Activated T-helper 1 cell treated with anti-CD3 and anti-CD28 coated beads, Interleukin-12 subunit alpha, Interleukin-12 subunit beta, Interleukin-2, Interleukin-4 antibody, amounts not matched to agents 30 ng/mL and 10 ng/mL and 1 ng/mL, durations not matched to agents 14 hours and 24 hours and 36 hours (primary cell): ENCODE measurements at regions of chr6 and their contacts with region 1.

Region 1: GRCh38 chr6:90393232-90393884 is 96.7 kb upstream of the BACH2 start:
- DNase-seq: peak; percentile 65
- H3K4me3 Mint-ChIP-seq: no peak overlapping the region
- H3K27ac Mint-ChIP-seq: peak overlapping the region; percentile 32
- H3K4me1 Mint-ChIP-seq: peaks cover 68% of the 10 kb centered on the region
- H3K27me3 Mint-ChIP-seq: no peaks in the 10 kb centered on the region

Region 2: GRCh38 chr6:90103056-90103800 is 290.1 kb before region 1 on chr6:
- intact Hi-C with region 1: loop called (anchors 2 kb)
- DNase-seq: no peak
- H3K4me3 Mint-ChIP-seq: peak overlapping the region; percentile 79
- H3K27ac Mint-ChIP-seq: peak overlapping the region; percentile 88
- H3K4me1 Mint-ChIP-seq: peaks cover 70% of the 10 kb centered on the region
- H3K27me3 Mint-ChIP-seq: no peaks in the 10 kb centered on the region

Region 3: DNA sequence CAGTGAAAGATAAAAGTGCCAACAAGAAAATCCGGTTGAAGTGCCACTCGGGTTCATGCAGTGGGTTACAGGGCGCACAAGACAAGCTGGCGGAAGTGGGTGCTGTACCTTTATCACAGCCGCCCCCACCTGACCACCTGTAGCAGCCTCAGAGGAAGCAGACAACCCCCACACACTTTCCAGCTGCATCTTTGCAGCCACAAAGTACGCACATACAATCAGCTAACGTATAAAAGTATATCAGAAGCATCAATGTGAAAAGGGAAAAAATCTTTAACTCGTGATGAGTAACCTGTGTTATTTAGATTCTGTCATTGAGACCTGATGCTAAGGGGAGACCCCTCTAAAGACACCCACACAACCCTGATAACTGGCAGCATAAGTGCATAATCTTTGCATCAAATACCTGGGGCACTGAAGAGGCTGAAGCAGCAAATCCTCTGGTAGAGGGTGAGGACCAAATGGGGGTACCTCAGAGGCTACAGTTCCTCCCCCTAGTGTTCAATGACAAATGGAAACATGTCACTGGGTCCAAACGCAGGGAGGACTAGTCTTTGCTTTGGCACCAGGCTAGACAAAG is 118.8 kb before region 1 on chr6:
- intact Hi-C with region 1: loop called (anchors 1 kb)
- DNase-seq: peak; percentile 75
- H3K4me3 Mint-ChIP-seq: peak overlapping the region; percentile 75
- H3K27ac Mint-ChIP-seq: peak overlapping the region; percentile 94
- H3K4me1 Mint-ChIP-seq: peaks cover 86% of the 10 kb centered on the region
- H3K27me3 Mint-ChIP-seq: no peaks in the 10 kb centered on the region

Region 4: GRCh38 chr6:90350689-90351554 is 42.4 kb before region 1 on chr6:
- intact Hi-C with region 1: loop called (anchors 1 kb)
- DNase-seq: peak; percentile 38
- H3K4me3 Mint-ChIP-seq: peak overlapping the region; percentile 39
- H3K27ac Mint-ChIP-seq: peak overlapping the region; percentile 78
- H3K4me1 Mint-ChIP-seq: peaks cover 46% of the 10 kb centered on the region
- H3K27me3 Mint-ChIP-seq: peaks cover 10% of the 10 kb centered on the region

Region 5: DNA sequence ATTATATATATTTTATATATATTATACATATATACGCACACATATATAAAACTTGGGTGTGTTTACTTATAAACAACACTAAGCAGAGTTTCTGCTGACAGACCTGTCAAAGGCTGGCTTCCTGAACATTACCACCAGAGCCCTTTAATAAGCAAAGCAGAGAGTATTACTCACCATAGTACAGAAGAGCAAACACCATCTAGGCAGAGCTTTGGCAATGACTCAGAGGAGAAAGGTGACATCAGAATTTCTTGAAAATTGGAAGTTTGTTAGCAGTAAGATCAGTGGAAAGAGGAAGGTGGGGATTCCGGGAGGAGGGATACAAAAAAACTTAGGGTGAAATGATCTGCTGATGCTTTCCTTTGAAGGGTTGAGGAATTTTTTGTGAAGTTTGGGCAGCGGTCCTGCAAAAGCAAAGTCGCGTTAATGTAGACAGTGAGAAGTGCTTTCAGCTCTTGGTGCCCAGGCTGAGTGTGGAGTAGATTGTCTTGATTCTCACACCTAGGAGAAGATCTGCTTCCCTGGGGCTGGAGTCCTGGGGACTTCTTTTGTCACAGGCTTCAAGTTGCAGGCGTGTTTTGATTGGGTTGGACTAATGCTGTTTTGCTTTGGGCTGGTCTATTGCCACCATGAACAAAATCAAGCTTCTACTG is 12.9 kb after region 1 on chr6:
- intact Hi-C with region 1: loop called (anchors 1 kb)
- DNase-seq: peak; percentile 26
- H3K4me3 Mint-ChIP-seq: peak overlapping the region; percentile 3
- H3K27ac Mint-ChIP-seq: peak overlapping the region; percentile 79
- H3K4me1 Mint-ChIP-seq: peaks cover 73% of the 10 kb centered on the region
- H3K27me3 Mint-ChIP-seq: peaks cover 4% of the 10 kb centered on the region

Region 6: DNA sequence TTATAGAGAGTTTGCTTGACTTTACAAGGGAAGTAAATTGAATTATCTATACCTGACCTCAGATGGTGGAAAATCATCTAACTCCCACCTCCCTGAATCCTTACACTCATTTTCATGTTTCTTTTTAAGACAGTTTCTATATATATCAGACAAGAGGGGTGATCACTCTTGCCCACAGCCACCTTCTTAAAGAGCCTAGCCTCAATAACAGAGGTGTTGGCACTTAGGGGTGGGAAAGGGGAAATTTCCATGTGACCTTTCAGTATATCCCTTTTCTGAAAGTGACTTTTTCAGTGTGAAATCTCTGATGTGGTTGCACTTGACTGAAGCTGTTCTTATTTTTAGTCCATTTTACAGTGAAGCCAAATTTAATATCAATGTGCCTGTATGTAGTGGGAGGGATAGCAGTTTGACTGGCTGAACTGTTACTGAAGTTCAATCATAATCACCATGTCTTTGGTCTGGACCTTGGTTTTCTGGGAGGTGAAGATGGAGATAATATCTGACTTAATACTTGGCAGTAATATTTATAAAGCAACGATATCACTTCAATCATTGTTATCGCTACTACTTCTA is 52.3 kb after region 1 on chr6:
- intact Hi-C with region 1: loop called (anchors 1 kb)
- DNase-seq: no peak
- H3K4me3 Mint-ChIP-seq: no peak overlapping the region
- H3K27ac Mint-ChIP-seq: peak overlapping the region; percentile 88
- H3K4me1 Mint-ChIP-seq: peaks cover 66% of the 10 kb centered on the region
- H3K27me3 Mint-ChIP-seq: no peaks in the 10 kb centered on the region

Region 7: GRCh38 chr6:90478789-90479602 is 85.6 kb after region 1 on chr6:
- intact Hi-C with region 1: loop called (anchors 1 kb)
- DNase-seq: peak; percentile 76
- H3K4me3 Mint-ChIP-seq: peak overlapping the region; percentile 3
- H3K27ac Mint-ChIP-seq: peak overlapping the region; percentile 85
- H3K4me1 Mint-ChIP-seq: peaks cover 56% of the 10 kb centered on the region
- H3K27me3 Mint-ChIP-seq: peaks cover 2% of the 10 kb centered on the region